Common myeloid progenitor, CD34-positive (primary cell): ENCODE measurements at regions of chr12 and their contacts with region 1.

Region 1: GRCh38 chr12:52327052-52327829 is 6.0 kb upstream of the KRT83 start:
- DNase-seq: peak; percentile 91 to 95 (median 94)
- H3K4me3 ChIP-seq: no peak overlapping the region
- H3K27ac ChIP-seq: no peak overlapping the region
- H3K4me1 ChIP-seq: no peaks in the 10 kb centered on the region
- H3K27me3 ChIP-seq: peaks cover 0 to 9% (median 3%) of the 10 kb centered on the region in 5 experiments

Region 2: DNA sequence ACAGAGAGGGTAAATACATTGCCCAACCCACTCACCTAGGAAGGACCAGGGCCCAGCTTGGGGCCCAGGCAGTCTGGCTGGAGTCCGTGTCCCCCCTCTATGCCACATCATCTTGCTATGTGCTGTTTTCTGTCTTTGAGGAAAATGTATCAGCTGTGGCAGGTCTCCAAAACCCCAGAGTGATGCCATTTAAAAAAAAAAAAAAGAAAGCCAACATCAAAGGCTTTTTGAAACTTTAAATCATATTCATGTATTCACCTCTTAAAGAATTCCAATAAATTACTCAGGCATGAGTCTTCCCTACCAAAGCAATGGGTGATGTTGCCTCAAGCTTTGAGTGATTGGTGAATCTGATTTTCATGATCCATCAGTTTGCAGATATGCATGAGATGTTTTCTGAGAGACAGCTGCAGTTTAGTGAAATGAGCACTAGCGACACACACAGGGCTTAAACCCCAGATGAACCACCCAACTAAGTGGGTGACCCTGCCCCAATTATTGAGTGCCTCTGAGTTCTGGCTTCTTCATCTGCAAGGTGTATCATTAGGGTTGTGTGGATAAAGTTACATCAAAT is 42.0 kb before region 1 on chr12:
- CTCF ChIA-PET with region 1: interaction called, 10 read pairs
- POLR2A ChIA-PET with region 1: no interaction called
- DNase-seq: no peak
- H3K4me3 ChIP-seq: no peak overlapping the region
- H3K27ac ChIP-seq: no peak overlapping the region
- H3K4me1 ChIP-seq: peaks cover 0 to 14% (median 11%) of the 10 kb centered on the region in 4 experiments
- H3K27me3 ChIP-seq: peaks cover 0 to under 1% (median 0%) of the 10 kb centered on the region in 5 experiments

Region 3: DNA sequence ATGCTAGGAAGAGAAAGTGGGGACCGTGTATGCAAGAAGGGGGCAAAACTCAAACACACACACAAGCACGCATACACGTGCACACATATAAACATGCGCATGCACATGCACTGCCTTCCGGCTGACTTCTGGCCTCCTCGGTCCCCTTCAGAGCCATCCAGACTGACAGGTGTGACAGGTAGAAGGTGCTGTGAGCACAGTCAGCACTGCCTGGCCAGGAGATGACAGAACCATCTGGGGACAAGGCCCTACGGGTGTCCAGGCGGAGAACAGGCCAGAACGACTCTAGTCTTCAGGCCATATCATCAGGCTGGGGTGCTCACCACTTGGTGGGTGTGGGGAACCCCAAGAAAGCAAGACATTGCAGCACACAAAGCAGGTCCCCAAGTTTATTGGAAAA is 13.3 kb before region 1 on chr12:
- CTCF ChIA-PET with region 1: interaction called, 151 read pairs
- POLR2A ChIA-PET with region 1: interaction called, 3 read pairs
- DNase-seq: no peak
- H3K4me3 ChIP-seq: no peak overlapping the region
- H3K27ac ChIP-seq: no peak overlapping the region
- H3K4me1 ChIP-seq: peaks cover 0 to under 1% (median 0%) of the 10 kb centered on the region in 4 experiments
- H3K27me3 ChIP-seq: peaks cover 0 to 40% (median 18%) of the 10 kb centered on the region in 5 experiments

Region 4: GRCh38 chr12:52351196-52352059 is 24.2 kb after region 1 on chr12:
- CTCF ChIA-PET with region 1: interaction called, 10 read pairs
- POLR2A ChIA-PET with region 1: no interaction called
- DNase-seq: peak; percentile 52 to 88 (median 87)
- H3K4me3 ChIP-seq: no peak overlapping the region
- H3K27ac ChIP-seq: no peak overlapping the region
- H3K4me1 ChIP-seq: peaks cover 0 to 18% (median 7%) of the 10 kb centered on the region in 4 experiments
- H3K27me3 ChIP-seq: peaks cover 0 to 13% (median 0%) of the 10 kb centered on the region in 5 experiments

Region 5: GRCh38 chr12:52522346-52523011 is 195.2 kb after region 1 on chr12:
- CTCF ChIA-PET with region 1: no interaction called
- POLR2A ChIA-PET with region 1: no interaction called
- DNase-seq: no peak
- H3K4me3 ChIP-seq: no peak overlapping the region
- H3K27ac ChIP-seq: no peak overlapping the region
- H3K4me1 ChIP-seq: no peaks in the 10 kb centered on the region
- H3K27me3 ChIP-seq: peaks cover 0 to 15% (median 6%) of the 10 kb centered on the region in 5 experiments